ENCODE measurements at regions of chr1 and their contacts with region 1.

Region 1: DNA sequence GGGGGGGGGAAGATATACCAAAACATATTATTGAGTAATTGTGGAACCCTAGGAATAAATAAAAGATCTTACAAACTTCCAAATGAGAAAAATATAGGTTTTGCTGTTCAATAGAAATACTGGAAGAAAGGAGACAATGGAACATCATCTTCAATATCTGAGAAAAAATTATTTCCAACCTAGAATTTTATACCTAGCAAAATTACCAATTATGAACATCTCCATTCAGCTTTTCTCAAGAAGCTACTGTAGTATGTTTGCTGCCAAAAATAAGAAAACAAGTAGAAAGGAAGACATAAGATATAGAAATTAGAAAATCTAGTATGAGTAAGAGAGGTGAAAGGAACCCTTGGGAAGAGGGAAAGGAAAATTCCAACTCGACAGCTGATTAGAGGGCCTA is 84.0 kb downstream of the GPR52 start:
- DNase-seq: no peak
- H3K4me3 ChIP-seq: no peak overlapping the region
- H3K4me3 Mint-ChIP-seq: no peak overlapping the region
- H3K27ac ChIP-seq: no peak overlapping the region
- H3K27ac Mint-ChIP-seq: no peak overlapping the region
- H3K4me1 ChIP-seq: no peaks in the 10 kb centered on the region
- H3K4me1 Mint-ChIP-seq: peaks cover 0 to 7% (median 1%) of the 10 kb centered on the region in 4 donors
- H3K27me3 ChIP-seq: no peaks in the 10 kb centered on the region
- H3K27me3 Mint-ChIP-seq: no peaks in the 10 kb centered on the region

Region 2: GRCh38 chr1:174577681-174578080 is 45.9 kb after region 1 on chr1:
- CTCF ChIA-PET with region 1: no interaction called
- POLR2A ChIA-PET with region 1: no interaction called
- intact Hi-C with region 1: loop called (anchors 2 kb)
- DNase-seq: no peak
- H3K4me3 ChIP-seq: no peak overlapping the region
- H3K4me3 Mint-ChIP-seq: no peak overlapping the region
- H3K27ac ChIP-seq: no peak overlapping the region
- H3K27ac Mint-ChIP-seq: no peak overlapping the region
- H3K4me1 ChIP-seq: no peaks in the 10 kb centered on the region
- H3K4me1 Mint-ChIP-seq: peaks cover 0 to 2% (median under 1%) of the 10 kb centered on the region in 4 donors
- H3K27me3 ChIP-seq: no peaks in the 10 kb centered on the region
- H3K27me3 Mint-ChIP-seq: no peaks in the 10 kb centered on the region